CD4-positive, alpha-beta T cell (primary cell): ENCODE measurements at regions of chr5 and their contacts with region 1.

Region 1: DNA sequence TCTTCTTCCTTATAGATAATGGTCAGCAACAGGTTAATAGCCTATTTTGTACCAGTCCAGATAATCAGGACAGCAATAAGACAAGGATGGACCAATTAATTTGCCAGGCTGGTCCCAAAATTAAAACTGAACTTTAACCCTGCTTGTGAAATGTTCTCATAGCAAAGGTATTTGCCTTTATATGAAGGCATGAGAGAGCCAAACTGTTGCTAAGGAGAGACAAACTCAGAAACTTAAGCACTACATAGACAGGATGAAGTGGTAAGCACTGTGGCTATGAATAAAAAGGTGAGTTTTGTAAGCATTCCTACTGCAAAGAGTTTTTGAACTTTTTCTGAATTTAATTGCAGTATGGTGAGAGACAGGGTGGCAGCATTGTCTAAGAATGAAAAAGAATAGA is 174.7 kb upstream of the PPP1R2B start:
- DNase-seq: no peak
- ATAC-seq: no peak
- H3K4me3 ChIP-seq: no peak overlapping the region
- H3K4me3 Mint-ChIP-seq: no peak overlapping the region
- H3K27ac ChIP-seq: no peak overlapping the region
- H3K27ac Mint-ChIP-seq: no peak overlapping the region
- H3K4me1 ChIP-seq: no peaks in the 10 kb centered on the region
- H3K4me1 Mint-ChIP-seq: no peaks in the 10 kb centered on the region
- H3K27me3 ChIP-seq: no peaks in the 10 kb centered on the region
- H3K27me3 Mint-ChIP-seq: peaks cover 5% of the 10 kb centered on the region
- CTCF ChIP-seq: no peak

Region 2: DNA sequence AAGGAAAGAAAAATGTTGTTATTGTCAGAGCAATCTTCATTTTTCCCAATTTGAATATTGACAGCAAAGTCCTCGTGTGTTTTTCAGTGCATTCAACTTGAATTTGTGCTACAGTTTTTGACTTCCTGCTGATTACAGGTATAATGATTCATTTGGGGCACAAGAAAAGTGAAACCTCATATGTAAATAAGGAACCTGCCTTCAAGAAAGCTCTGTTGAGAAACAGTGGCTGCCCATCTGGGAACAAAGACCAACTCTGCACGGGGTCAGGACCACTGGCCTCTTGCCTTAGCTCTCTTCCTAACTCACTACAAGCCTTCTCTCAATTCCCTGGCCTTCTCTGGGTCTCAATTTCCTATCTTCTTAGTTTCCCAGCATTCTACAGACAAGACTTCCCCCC is 266.7 kb after region 1 on chr5:
- CTCF ChIA-PET with region 1: no interaction called
- POLR2A ChIA-PET with region 1: no interaction called
- intact Hi-C with region 1: loop called in 1 of 2 experiments (anchors 10 kb)
- DNase-seq: peak in 1 of 14 experiments; percentile 28
- ATAC-seq: no peak
- H3K4me3 ChIP-seq: no peak overlapping the region
- H3K4me3 Mint-ChIP-seq: peak overlapping the region; percentile 8
- H3K27ac ChIP-seq: peak overlapping the region in 1 of 2 donors; percentile 26
- H3K27ac Mint-ChIP-seq: peak overlapping the region; percentile 35
- H3K4me1 ChIP-seq: peaks cover 5% of the 10 kb centered on the region
- H3K4me1 Mint-ChIP-seq: peaks cover 8% of the 10 kb centered on the region
- H3K27me3 ChIP-seq: no peaks in the 10 kb centered on the region
- H3K27me3 Mint-ChIP-seq: no peaks in the 10 kb centered on the region
- CTCF ChIP-seq: no peak

Region 3: GRCh38 chr5:157030692-157031091 is 355.3 kb after region 1 on chr5:
- CTCF ChIA-PET with region 1: no interaction called
- POLR2A ChIA-PET with region 1: no interaction called
- intact Hi-C with region 1: loop called in 1 of 2 experiments (anchors 5 kb)
- DNase-seq: peak in 1 of 14 experiments; percentile 55
- ATAC-seq: no peak
- H3K4me3 ChIP-seq: no peak overlapping the region
- H3K4me3 Mint-ChIP-seq: no peak overlapping the region
- H3K27ac ChIP-seq: no peak overlapping the region
- H3K27ac Mint-ChIP-seq: no peak overlapping the region
- H3K4me1 ChIP-seq: peaks cover under 1% of the 10 kb centered on the region
- H3K4me1 Mint-ChIP-seq: peaks cover 7% of the 10 kb centered on the region
- H3K27me3 ChIP-seq: no peaks in the 10 kb centered on the region
- H3K27me3 Mint-ChIP-seq: no peaks in the 10 kb centered on the region
- CTCF ChIP-seq: no peak